Activated CD4-positive, alpha-beta memory T cell treated with anti-CD3 and anti-CD28 coated beads, Interleukin-2, amount 10 ng/mL, durations not matched to agents 7 days and 5 days (primary cell): ENCODE measurements at regions of chr9 and their contacts with region 1.

Region 1: GRCh38 chr9:130693426-130694191 is at the start of gene EXOSC2:
- DNase-seq: peak; percentile 99
- H3K4me3 Mint-ChIP-seq: peak within 1 kb of the TSS; percentile 89
- H3K27ac Mint-ChIP-seq: peak within 1 kb of the TSS; percentile 85
- H3K4me1 Mint-ChIP-seq: peaks cover 55% of the 10 kb centered on the region
- H3K27me3 Mint-ChIP-seq: no peaks in the 10 kb centered on the region
- total RNA-seq, gene EXOSC2: 45.2 to 48.7 TPM

Region 2: GRCh38 chr9:130590305-130590704 is 103.3 kb before region 1 on chr9:
- CTCF ChIA-PET with region 1: no interaction called
- POLR2A ChIA-PET with region 1: no interaction called
- DNase-seq: no peak
- H3K4me3 Mint-ChIP-seq: no peak overlapping the region
- H3K27ac Mint-ChIP-seq: no peak overlapping the region
- H3K4me1 Mint-ChIP-seq: no peaks in the 10 kb centered on the region
- H3K27me3 Mint-ChIP-seq: no peaks in the 10 kb centered on the region

Region 3: GRCh38 chr9:130629443-130630090 is 64.0 kb before region 1 on chr9:
- CTCF ChIA-PET with region 1: no interaction called
- POLR2A ChIA-PET with region 1: no interaction called
- DNase-seq: no peak
- H3K4me3 Mint-ChIP-seq: no peak overlapping the region
- H3K27ac Mint-ChIP-seq: no peak overlapping the region
- H3K4me1 Mint-ChIP-seq: no peaks in the 10 kb centered on the region
- H3K27me3 Mint-ChIP-seq: no peaks in the 10 kb centered on the region

Region 4: DNA sequence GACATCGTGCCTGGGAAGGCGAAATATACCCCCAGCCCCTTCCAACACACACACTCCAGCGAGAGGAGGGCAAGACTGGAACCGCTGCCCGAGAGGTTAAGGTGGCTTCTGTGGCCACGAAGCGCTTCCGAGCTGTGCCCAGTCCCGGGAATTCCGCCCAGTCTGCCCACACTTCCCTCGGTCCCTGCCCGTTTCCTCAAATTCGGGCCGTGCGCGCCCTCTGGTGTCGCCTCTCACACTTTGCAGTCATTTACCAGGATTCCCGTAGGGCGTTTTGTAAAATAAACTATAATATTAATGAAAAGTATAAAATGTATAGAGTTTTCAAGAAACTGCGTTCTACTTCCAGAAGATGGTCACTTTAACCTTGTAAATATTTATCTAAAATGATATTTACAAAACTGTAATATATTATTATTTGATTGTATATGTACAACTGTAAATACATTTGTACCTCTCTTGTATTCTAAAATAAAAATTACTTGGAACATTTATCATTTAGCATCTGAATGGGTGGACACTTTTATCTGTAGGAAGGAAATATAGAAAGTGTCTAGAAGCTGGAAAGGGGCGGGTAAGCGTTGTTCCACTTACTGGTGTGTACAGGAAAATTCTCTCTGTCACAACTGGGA is 11.0 kb before region 1 on chr9:
- CTCF ChIA-PET with region 1: interaction called, 20 read pairs
- POLR2A ChIA-PET with region 1: interaction called, 17 read pairs
- DNase-seq: peak; percentile 60
- H3K4me3 Mint-ChIP-seq: peak overlapping the region; percentile 82
- H3K27ac Mint-ChIP-seq: no peak overlapping the region
- H3K4me1 Mint-ChIP-seq: peaks cover 9% of the 10 kb centered on the region
- H3K27me3 Mint-ChIP-seq: peaks cover 21% of the 10 kb centered on the region

Region 5: DNA sequence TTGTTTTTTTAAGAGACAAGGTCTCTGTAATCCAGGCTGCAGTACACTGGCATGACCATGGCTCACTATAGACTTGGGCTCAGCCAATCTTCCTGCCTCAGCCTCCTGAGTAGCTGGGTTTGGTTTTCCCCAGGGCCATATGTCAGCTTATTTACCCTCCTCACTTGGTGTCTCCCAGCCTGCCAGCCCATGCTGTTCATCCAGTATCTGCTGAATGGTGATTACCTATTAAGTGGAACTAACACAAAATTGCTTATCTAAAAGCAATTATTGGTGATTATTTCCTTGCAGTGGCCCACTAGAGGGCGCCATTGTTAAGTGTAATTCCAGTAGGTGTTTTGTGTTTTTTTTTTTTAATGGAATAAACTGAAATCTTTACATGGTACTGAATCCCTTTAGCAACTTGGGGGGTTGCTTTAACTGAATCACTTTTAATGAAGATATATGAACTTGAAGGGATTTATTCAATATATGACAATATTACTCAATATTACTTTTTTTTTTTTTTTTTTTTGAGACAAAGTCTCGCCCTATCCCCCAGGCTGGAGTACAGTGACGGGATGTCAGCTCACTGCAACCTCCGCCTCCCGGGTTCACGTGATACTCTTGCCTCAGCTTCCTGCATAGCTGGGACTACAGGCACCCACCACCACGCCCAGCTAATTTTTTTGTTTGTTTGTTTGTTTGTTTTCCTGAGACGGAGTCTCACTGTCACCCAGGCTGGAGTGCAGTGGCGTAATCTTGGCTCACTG is 13.8 kb after region 1 on chr9:
- CTCF ChIA-PET with region 1: interaction called, 25 read pairs
- POLR2A ChIA-PET with region 1: interaction called, 48 read pairs
- DNase-seq: peak; percentile 70
- H3K4me3 Mint-ChIP-seq: no peak overlapping the region
- H3K27ac Mint-ChIP-seq: no peak overlapping the region
- H3K4me1 Mint-ChIP-seq: peaks cover 5% of the 10 kb centered on the region
- H3K27me3 Mint-ChIP-seq: no peaks in the 10 kb centered on the region

Region 6: DNA sequence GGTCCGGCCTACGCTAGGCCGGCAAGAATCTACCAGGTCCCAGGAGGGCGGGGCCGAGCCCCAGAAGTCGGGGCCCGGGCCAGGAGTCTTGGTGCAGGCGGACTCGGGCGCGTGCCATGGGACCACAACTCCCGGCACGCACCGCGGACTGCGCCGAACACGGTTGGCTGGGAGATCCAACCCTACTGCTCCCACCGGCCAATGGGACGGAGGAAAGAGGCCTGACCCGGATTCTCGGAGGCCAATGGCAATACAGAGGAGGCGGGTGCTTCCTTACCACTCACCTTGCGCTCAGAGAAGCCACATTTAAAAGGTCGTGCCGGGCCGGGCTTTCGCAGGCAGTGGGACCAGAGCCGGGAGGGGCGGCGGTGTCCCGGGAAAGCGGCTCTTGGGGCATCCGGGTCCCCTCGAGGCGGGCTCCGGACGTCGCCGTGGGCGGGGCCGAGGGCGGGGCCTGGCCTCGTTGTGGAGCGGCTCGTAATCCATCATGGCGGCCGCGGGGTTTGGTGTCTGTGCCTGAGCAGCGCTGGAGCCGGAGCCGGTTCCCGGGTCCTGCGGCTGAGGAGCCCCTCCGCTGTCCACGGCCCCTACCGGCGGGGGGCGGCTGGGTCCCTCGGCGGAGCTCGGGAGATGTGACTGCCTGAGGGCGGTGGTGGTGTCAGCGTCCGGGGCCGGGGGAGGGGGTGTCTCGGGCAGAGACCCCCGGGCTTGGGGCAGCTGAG is 19.1 kb after region 1 on chr9:
- CTCF ChIA-PET with region 1: interaction called, 25 read pairs
- POLR2A ChIA-PET with region 1: interaction called, 48 read pairs
- DNase-seq: peak; percentile 97
- H3K4me3 Mint-ChIP-seq: peak overlapping the region; percentile 86
- H3K27ac Mint-ChIP-seq: peak overlapping the region; percentile 90
- H3K4me1 Mint-ChIP-seq: peaks cover 39% of the 10 kb centered on the region
- H3K27me3 Mint-ChIP-seq: no peaks in the 10 kb centered on the region